ENCODE measurements at regions of chr2 and their contacts with region 1.

Region 1: GRCh38 chr2:30404319-30404953 is 42.6 kb upstream of the LCLAT1 start:
- DNase-seq: no peak
- H3K4me3 ChIP-seq: no peak overlapping the region
- H3K27ac ChIP-seq: peak overlapping the region; percentile 77
- H3K27me3 ChIP-seq: no peaks in the 10 kb centered on the region
- CTCF ChIP-seq: no peak

Region 2: GRCh38 chr2:30366199-30366691 is 38.2 kb before region 1 on chr2:
- CTCF ChIA-PET with region 1: interaction called, 3 read pairs
- POLR2A ChIA-PET with region 1: interaction called, 12 read pairs
- DNase-seq: no peak
- H3K4me3 ChIP-seq: no peak overlapping the region
- H3K27ac ChIP-seq: peak overlapping the region; percentile 77
- H3K27me3 ChIP-seq: no peaks in the 10 kb centered on the region
- CTCF ChIP-seq: no peak